CD8-positive, alpha-beta T cell (primary cell): ENCODE measurements at regions of chr22 and their contacts with region 1.

Region 1: GRCh38 chr22:42270512-42271417 is at the start of gene TCF20:
- DNase-seq: peak; percentile 53 to 92 (median 78)
- ATAC-seq: peak; percentile 78
- H3K4me3 ChIP-seq: peak within 1 kb of the TSS; percentile 82 to 95
- H3K4me3 Mint-ChIP-seq: peak within 1 kb of the TSS; percentile 85
- H3K27ac ChIP-seq: peak within 1 kb of the TSS; percentile 73 to 74
- H3K27ac Mint-ChIP-seq: peak within 1 kb of the TSS; percentile 87
- H3K4me1 ChIP-seq: peaks cover 21% of the 10 kb centered on the region
- H3K4me1 Mint-ChIP-seq: peaks cover 29% of the 10 kb centered on the region
- H3K27me3 ChIP-seq: no peaks in the 10 kb centered on the region
- H3K27me3 Mint-ChIP-seq: no peaks in the 10 kb centered on the region
- CTCF ChIP-seq: no peak
- total RNA-seq, gene TCF20: 50.7 to 60.6 TPM

Region 2: GRCh38 chr22:42079319-42080251 is 191.2 kb before region 1 on chr22 and contains the start of gene SMDT1:
- CTCF ChIA-PET with region 1: no interaction called
- POLR2A ChIA-PET with region 1: no interaction called
- intact Hi-C with region 1: loop called in 1 of 2 experiments (anchors 5 kb)
- DNase-seq: peak; percentile 95 to 99 (median 98)
- ATAC-seq: peak; percentile 92
- H3K4me3 ChIP-seq: peak within 1 kb of the TSS; percentile 79 to 80
- H3K4me3 Mint-ChIP-seq: peak within 1 kb of the TSS; percentile 93
- H3K27ac ChIP-seq: peak within 1 kb of the TSS; percentile 89 to 97
- H3K27ac Mint-ChIP-seq: peak within 1 kb of the TSS; percentile 98
- H3K4me1 ChIP-seq: peaks cover 21% of the 10 kb centered on the region
- H3K4me1 Mint-ChIP-seq: peaks cover 36% of the 10 kb centered on the region
- H3K27me3 ChIP-seq: no peaks in the 10 kb centered on the region
- H3K27me3 Mint-ChIP-seq: no peaks in the 10 kb centered on the region
- CTCF ChIP-seq: no peak
- total RNA-seq, gene SMDT1: 30.4 to 34.5 TPM

Region 3: DNA sequence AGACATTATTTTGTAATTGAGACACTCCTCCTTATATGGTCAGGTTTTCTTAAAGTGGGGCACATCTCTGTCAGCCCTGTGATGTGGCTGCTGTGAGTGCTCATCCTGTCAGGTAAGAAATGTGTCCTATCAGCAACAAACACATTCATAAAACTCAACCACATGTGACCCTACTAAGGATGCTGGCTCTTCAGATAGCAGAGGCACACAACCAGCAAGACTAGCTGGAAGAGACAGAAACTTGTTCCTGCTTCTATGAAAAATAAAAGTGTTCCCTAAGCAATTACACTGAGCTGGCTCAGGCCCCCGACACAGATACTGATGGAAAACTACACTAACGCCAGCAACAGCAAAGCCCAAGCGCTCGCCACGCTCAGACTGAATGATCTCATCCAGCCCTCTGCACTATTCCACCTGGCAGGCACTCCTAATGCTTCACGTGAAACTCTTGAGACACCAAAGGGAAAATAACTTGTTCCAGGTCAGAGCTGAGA is 90.4 kb before region 1 on chr22:
- CTCF ChIA-PET with region 1: no interaction called
- POLR2A ChIA-PET with region 1: no interaction called
- intact Hi-C with region 1: loop called (anchors 5 kb)
- DNase-seq: peak in 8 of 9 experiments; percentile 18 to 82 (median 59)
- ATAC-seq: peak; percentile 96
- H3K4me3 ChIP-seq: no peak overlapping the region
- H3K4me3 Mint-ChIP-seq: peak overlapping the region; percentile 51
- H3K27ac ChIP-seq: peak overlapping the region in 1 of 2 experiments; percentile 61
- H3K27ac Mint-ChIP-seq: peak overlapping the region; percentile 88
- H3K4me1 ChIP-seq: peaks cover 26% of the 10 kb centered on the region
- H3K4me1 Mint-ChIP-seq: peaks cover 56% of the 10 kb centered on the region
- H3K27me3 ChIP-seq: no peaks in the 10 kb centered on the region
- H3K27me3 Mint-ChIP-seq: no peaks in the 10 kb centered on the region
- CTCF ChIP-seq: no peak

Region 4: DNA sequence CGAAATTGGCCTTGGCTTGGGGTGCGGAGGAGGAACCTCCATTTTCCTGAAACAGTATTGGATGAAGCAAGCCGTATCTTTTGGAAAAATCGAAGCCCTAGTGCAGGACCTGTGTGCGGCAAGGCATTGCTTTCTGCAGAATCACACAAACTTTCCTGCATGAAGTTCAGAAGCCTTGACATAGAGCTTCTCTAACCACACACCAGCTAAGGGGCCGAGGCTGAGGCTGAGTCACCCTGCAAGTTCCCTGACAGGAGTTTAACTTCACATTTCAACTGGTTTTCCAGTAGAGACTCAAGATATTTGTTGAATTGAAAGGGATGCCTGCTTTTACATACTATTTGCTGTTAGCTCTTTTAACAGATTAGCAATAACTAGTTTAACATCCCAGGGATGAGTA is 68.1 kb before region 1 on chr22:
- CTCF ChIA-PET with region 1: no interaction called
- POLR2A ChIA-PET with region 1: no interaction called
- intact Hi-C with region 1: loop called in 1 of 2 experiments (anchors 5 kb)
- DNase-seq: peak in 8 of 9 experiments; percentile 26 to 62 (median 48)
- ATAC-seq: peak; percentile 74
- H3K4me3 ChIP-seq: no peak overlapping the region
- H3K4me3 Mint-ChIP-seq: peak overlapping the region; percentile 63
- H3K27ac ChIP-seq: peak overlapping the region in 1 of 2 experiments; percentile 55
- H3K27ac Mint-ChIP-seq: peak overlapping the region; percentile 83
- H3K4me1 ChIP-seq: peaks cover 29% of the 10 kb centered on the region
- H3K4me1 Mint-ChIP-seq: peaks cover 63% of the 10 kb centered on the region
- H3K27me3 ChIP-seq: no peaks in the 10 kb centered on the region
- H3K27me3 Mint-ChIP-seq: no peaks in the 10 kb centered on the region
- CTCF ChIP-seq: no peak

Region 5: DNA sequence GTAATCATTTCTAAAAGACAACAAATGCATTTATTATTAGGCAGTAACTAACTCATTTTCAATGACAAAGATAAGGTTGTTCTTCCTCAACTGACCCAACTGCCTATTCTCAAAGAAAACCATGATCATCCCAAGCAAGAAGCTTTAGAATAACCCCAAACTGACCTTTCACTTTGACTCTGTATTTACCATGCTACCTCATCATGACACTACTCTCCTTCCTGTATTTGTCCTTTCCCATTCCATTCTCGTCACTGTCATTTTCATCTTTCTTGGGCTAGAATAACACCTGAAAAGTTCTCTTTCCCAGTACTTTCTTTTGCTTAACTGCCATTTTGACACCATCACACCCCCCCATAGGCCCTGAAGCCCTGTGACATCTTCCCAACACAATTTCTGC is 48.6 kb before region 1 on chr22:
- CTCF ChIA-PET with region 1: no interaction called
- POLR2A ChIA-PET with region 1: no interaction called
- intact Hi-C with region 1: no loop called
- DNase-seq: no peak
- ATAC-seq: no peak
- H3K4me3 ChIP-seq: no peak overlapping the region
- H3K4me3 Mint-ChIP-seq: no peak overlapping the region
- H3K27ac ChIP-seq: no peak overlapping the region
- H3K27ac Mint-ChIP-seq: peak overlapping the region; percentile 15
- H3K4me1 ChIP-seq: peaks cover 33% of the 10 kb centered on the region
- H3K4me1 Mint-ChIP-seq: peaks cover 67% of the 10 kb centered on the region
- H3K27me3 ChIP-seq: no peaks in the 10 kb centered on the region
- H3K27me3 Mint-ChIP-seq: no peaks in the 10 kb centered on the region
- CTCF ChIP-seq: no peak

Region 6: DNA sequence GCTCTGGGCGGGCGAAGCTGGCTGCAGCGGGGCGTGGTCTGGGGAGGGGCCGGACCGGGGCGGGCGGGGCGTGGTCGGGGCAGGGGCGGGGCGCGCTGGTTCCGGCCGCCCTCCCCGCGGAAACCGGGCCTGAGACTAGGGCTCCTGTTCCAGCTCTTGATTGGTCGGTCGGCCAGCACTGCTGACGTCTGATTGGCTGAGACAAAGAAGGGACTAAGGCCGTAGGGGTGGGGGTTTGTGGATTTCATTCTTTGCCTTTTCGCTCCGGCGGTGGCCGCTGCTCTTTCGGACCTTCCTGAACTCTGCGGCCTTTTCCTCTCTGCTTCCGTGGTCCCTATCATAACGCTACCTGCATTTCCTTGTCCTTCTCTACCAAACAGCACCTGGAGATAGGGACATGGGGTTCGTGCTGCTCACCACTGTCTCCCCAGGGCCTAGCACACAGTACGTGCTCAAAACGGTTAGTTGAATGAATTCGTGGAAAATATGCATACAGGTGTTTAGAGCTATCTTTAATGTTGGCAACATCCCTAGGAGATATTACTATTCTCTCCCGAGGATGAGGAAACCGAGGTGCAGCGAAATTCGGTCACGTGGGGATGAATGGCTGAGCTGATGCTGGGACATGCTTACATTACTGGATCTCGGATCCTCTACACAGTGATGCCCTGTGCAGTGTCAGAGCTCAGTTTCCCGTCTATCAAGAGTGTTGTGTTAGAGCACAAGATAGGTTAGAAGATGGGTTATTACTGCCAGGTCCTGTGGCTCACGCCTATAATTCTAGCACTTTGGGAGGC is 98.7 kb after region 1 on chr22:
- CTCF ChIA-PET with region 1: no interaction called
- POLR2A ChIA-PET with region 1: no interaction called
- intact Hi-C with region 1: loop called (anchors 1 to 5 kb)
- DNase-seq: peak; percentile 49 to 91 (median 82)
- ATAC-seq: peak; percentile 97
- H3K4me3 ChIP-seq: peak overlapping the region; percentile 60 to 86
- H3K4me3 Mint-ChIP-seq: peak overlapping the region; percentile 85
- H3K27ac ChIP-seq: no peak overlapping the region
- H3K27ac Mint-ChIP-seq: peak overlapping the region; percentile 9
- H3K4me1 ChIP-seq: peaks cover 18% of the 10 kb centered on the region
- H3K4me1 Mint-ChIP-seq: peaks cover 19% of the 10 kb centered on the region
- H3K27me3 ChIP-seq: peaks cover 9 to 24% of the 10 kb centered on the region in 2 experiments
- H3K27me3 Mint-ChIP-seq: peaks cover 23% of the 10 kb centered on the region
- CTCF ChIP-seq: no peak